ENCODE measurements at regions of chr1 and their contacts with region 1.

Region 1: DNA sequence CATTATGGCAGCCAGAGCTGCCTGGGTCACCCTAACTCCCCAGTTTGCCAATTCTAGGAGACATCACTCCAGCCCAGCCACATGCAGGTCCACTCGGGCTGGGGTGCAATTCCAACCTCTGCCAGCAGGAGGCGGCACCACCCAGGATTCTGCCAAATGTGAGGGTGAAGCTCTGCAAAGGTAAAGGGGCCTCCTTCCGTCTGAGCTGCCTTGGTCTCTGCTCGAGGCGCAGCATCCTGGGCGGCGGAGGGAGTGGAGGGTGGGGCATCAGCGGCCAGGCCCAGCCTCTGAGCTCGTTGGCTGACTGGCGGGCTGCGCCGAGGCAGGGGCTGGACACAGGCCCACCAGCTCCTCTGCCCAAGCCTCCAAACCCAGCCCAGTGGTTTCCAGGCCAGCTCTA is 63.8 kb downstream of the ARHGEF16 start:
- DNase-seq: peak; percentile 67
- ATAC-seq: peak; percentile 36; the same call in 1 of the 2 replicates
- H3K4me3 Mint-ChIP-seq: no peak overlapping the region
- H3K27ac Mint-ChIP-seq: no peak overlapping the region
- H3K4me1 Mint-ChIP-seq: no peaks in the 10 kb centered on the region
- H3K27me3 Mint-ChIP-seq: no peaks in the 10 kb centered on the region
- CTCF ChIP-seq: peak; percentile 95

Region 2: DNA sequence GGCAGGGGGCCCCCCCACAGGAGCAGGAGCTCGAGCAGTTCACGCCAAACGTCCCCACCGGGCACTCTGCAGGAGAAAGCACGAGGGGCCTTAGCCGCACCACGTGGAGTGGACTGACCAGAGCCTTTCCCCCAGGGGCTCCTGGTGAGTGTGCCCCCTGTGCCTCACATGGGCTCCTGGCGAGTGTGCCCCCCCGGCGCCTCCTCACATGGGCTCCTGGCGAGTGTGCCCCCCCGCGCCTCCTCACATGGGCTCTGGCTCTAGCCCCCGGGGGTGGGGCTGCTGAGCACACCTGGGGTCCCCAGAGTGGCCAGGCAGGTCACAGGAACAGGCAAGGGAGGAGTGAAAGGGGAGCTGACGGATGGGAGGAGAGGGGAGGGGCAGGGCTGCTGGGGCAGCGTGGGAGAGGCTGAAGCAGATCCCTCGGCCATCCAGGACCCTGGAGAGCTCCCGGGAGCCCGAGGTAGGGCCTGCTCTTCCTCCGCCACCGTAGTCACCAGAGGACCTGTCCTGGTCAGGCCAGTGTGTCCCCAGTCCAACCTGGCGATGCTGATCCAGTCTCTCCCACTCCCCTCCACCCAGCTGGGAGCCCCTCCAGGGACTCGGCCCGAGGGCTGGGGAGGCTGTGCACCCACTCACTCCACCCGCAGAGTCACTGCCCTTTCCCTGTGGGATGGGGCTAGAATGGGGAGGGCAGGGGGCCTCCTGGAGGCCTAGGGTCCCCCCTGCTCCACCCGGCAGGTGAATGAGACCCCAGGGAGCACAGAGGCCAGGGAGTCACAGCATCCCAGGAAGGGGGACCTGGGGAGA is 16.2 kb before region 1 on chr1:
- CTCF ChIA-PET with region 1: interaction called, 17 read pairs
- POLR2A ChIA-PET with region 1: no interaction called
- DNase-seq: peak; percentile 90
- ATAC-seq: peak; percentile 90
- H3K4me3 Mint-ChIP-seq: no peak overlapping the region
- H3K27ac Mint-ChIP-seq: no peak overlapping the region
- H3K4me1 Mint-ChIP-seq: no peaks in the 10 kb centered on the region
- H3K27me3 Mint-ChIP-seq: no peaks in the 10 kb centered on the region
- CTCF ChIP-seq: no peak

Region 3: DNA sequence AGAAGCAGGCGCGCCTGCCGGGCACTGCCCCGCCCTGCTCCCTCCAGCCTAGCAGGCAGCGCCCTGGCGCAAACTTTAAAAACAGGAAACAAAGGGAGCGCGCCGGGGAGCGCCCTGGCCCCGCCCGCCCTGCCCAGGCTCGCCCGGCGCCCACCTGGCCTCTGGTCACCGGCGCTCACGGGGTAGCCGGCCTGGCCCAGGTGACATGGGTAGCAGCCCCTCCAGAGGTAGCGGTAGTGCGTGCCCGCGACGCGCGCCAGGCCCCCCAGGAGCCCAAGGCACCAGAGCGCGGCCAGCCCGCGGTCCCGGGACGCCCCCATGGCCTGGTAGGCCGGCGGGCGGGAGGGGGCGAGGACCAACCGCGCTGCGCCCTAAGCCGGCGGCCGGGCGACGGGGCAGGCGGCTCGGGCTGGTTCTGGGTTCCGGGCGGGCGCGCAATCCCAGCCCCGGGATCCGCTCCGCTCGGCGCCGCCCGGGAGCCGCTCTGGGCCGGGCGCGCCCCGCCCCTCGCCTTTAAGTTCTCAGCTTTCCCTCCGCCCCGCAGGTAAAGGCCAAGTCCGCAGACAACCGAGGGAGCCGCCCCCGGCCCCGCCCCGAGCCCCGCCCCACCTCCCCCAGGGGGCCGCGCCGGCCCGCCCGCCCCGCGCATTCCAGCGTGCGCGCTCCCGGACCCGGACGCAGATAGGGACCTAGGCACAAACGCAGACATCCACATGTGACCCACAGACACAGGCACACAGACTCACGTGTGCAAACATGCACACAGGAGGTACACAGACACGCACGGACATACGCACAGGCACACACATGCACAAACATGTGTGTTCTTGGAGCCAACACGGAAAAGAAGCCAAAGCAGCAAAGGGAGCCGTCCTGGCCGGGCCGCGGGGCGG is 12.9 kb after region 1 on chr1:
- CTCF ChIA-PET with region 1: interaction called, 27 read pairs
- POLR2A ChIA-PET with region 1: interaction called, 3 read pairs
- DNase-seq: peak; percentile 88
- ATAC-seq: peak; percentile 89
- H3K4me3 Mint-ChIP-seq: peak overlapping the region; percentile 88
- H3K27ac Mint-ChIP-seq: peak overlapping the region; percentile 99
- H3K4me1 Mint-ChIP-seq: peaks cover 10% of the 10 kb centered on the region
- H3K27me3 Mint-ChIP-seq: peaks cover 24% of the 10 kb centered on the region
- CTCF ChIP-seq: no peak

Region 4: DNA sequence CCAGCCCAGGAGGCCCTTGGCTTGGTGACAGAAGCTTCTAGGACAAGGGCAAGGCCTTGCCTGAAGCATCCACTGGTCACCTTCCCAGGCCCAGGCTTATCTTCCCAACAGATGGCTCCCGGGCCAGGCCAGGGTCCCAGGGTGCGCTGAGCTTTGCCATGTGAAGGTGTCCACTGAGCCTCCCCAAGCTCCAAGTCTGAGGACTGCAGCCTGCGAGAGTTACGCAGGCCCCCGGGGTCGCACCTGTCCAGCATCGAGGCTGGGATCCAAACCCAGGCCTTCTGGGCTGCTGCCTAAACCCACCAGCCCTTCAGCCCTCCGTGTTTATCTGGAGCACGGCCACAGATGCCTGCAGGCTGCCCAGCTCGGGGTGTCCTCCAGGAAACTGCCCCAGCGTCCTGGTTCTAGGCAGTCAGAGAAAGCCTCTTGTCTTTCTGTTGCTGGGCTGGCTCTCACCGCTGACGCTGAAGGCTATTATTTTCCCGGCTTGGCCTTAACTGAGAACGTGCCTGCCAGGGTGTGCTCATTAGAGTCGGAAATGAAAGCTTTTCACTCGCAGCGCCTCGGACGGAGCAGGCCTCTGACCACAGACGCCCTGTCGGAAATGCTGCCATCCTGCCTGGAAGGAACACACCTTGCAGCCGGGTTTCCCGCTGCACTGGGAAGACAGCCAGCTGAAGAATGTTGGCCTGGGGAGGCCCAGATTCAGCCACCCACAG is 21.6 kb after region 1 on chr1:
- CTCF ChIA-PET with region 1: interaction called, 10 read pairs
- POLR2A ChIA-PET with region 1: no interaction called
- DNase-seq: no peak
- ATAC-seq: no peak
- H3K4me3 Mint-ChIP-seq: no peak overlapping the region
- H3K27ac Mint-ChIP-seq: no peak overlapping the region
- H3K4me1 Mint-ChIP-seq: no peaks in the 10 kb centered on the region
- H3K27me3 Mint-ChIP-seq: no peaks in the 10 kb centered on the region
- CTCF ChIP-seq: no peak

Measured in WTC11 (cell line).